Activated CD4-positive, alpha-beta T cell treated with anti-CD3 and anti-CD28 coated beads for 36 hours (primary cell): ENCODE measurements at regions of chr21 and their contacts with region 1.

Region 1: GRCh38 chr21:30340441-30341241 is 3.1 kb upstream of the KRTAP27-1 start:
- DNase-seq: peak; percentile 46
- ATAC-seq: no peak
- H3K4me3 Mint-ChIP-seq: no peak overlapping the region
- H3K27ac Mint-ChIP-seq: no peak overlapping the region
- H3K4me1 Mint-ChIP-seq: no peaks in the 10 kb centered on the region
- H3K27me3 Mint-ChIP-seq: peaks cover 7% of the 10 kb centered on the region

Region 2: GRCh38 chr21:30434033-30434631 is 93.5 kb after region 1 on chr21:
- CTCF ChIA-PET with region 1: interaction called, 3 read pairs
- POLR2A ChIA-PET with region 1: no interaction called
- intact Hi-C with region 1: loop called in 1 of 2 experiments (anchors 2 kb)
- DNase-seq: peak; percentile 43
- ATAC-seq: peak; percentile 49
- H3K4me3 Mint-ChIP-seq: no peak overlapping the region
- H3K27ac Mint-ChIP-seq: no peak overlapping the region
- H3K4me1 Mint-ChIP-seq: no peaks in the 10 kb centered on the region
- H3K27me3 Mint-ChIP-seq: peaks cover 15% of the 10 kb centered on the region

Region 3: DNA sequence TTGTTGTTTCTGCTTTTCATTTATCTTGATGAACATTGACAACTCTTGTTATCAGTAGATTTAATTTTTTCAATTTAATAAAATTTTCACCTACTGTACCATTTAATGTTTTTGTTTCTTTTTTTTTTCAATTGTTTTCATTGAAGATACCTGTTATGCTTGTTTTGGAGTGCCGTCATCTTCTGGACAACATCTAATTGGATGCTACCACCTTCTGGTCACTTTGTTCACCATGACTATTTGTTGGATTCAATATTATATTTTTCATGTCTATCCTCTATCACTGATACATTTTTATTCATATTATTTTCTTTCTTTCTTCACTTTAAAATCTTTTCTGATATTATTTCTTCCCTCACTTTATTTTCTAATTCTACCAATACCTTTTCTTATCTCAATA is 392.4 kb after region 1 on chr21:
- CTCF ChIA-PET with region 1: no interaction called
- POLR2A ChIA-PET with region 1: no interaction called
- intact Hi-C with region 1: loop called in 1 of 2 experiments (anchors 2 kb)
- DNase-seq: no peak
- ATAC-seq: no peak
- H3K4me3 Mint-ChIP-seq: no peak overlapping the region
- H3K27ac Mint-ChIP-seq: no peak overlapping the region
- H3K4me1 Mint-ChIP-seq: no peaks in the 10 kb centered on the region
- H3K27me3 Mint-ChIP-seq: peaks cover 6% of the 10 kb centered on the region

Region 4: GRCh38 chr21:31310750-31311149 is 970.1 kb after region 1 on chr21:
- CTCF ChIA-PET with region 1: no interaction called
- POLR2A ChIA-PET with region 1: no interaction called
- intact Hi-C with region 1: no loop called
- DNase-seq: no peak
- ATAC-seq: no peak
- H3K4me3 Mint-ChIP-seq: no peak overlapping the region
- H3K27ac Mint-ChIP-seq: no peak overlapping the region
- H3K4me1 Mint-ChIP-seq: no peaks in the 10 kb centered on the region
- H3K27me3 Mint-ChIP-seq: no peaks in the 10 kb centered on the region

Region 5: DNA sequence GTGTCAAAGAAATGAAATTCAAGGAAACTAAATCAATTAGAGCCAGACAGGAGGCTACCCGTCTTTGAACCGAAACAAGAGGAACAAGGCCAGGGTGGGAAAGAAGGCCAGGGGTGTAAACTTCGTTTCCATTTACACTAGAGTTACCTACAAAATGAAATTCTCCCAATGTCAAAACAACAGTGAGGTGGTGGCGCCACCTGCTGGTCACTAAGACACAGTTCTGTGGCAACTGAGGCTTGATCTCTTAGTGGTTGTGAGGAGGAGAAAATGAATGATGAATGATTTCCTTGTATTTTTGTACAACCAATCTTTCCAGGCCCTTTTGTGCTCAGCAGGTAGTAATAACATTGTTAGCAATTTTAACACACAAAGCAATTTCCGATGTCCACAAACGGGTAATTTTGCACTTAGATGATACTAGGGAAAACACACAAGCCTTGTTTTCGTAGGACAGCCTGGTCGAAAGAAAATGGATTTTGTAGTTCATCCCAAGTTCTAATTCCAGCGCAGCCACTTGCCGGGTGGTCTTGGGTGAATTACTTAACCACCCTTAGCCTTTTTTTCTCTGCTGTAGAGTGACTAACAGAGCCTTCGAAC is 1264.0 kb after region 1 on chr21:
- CTCF ChIA-PET with region 1: no interaction called
- POLR2A ChIA-PET with region 1: no interaction called
- intact Hi-C with region 1: loop called in 1 of 2 experiments (anchors 5 kb)
- DNase-seq: peak; percentile 87
- ATAC-seq: peak; percentile 80
- H3K4me3 Mint-ChIP-seq: no peak overlapping the region
- H3K27ac Mint-ChIP-seq: no peak overlapping the region
- H3K4me1 Mint-ChIP-seq: peaks cover 10% of the 10 kb centered on the region
- H3K27me3 Mint-ChIP-seq: no peaks in the 10 kb centered on the region